K562 (cell line): ENCODE measurements at regions of chr3 and their contacts with region 1.

Region 1: GRCh38 chr3:194141415-194142155 is 5.6 kb downstream of the HES1 start:
- DNase-seq: peak; percentile 89 to 91 (median 90)
- ATAC-seq: peak; percentile 71
- H3K4me3 ChIP-seq: peak overlapping the region; percentile 40
- H3K27ac ChIP-seq: peak overlapping the region; percentile 99
- H3K4me1 ChIP-seq: peaks cover 40 to 53% of the 10 kb centered on the region in 2 experiments
- H3K27me3 ChIP-seq: no peaks in the 10 kb centered on the region
- CTCF ChIP-seq: 0 out of 6 replicates have a peak, but pooled peaks of 1 of the 3 experiments have one; percentile 5
- EP300 ChIP-seq: no peak; the same call in 1 of the 2 replicates
- POLR2A ChIP-seq: peak; percentile 75
- RAD21 ChIP-seq: peak; percentile 40 to 47

Region 2: GRCh38 chr3:193780810-193781472 is 360.6 kb before region 1 on chr3:
- CTCF ChIA-PET with region 1: interaction called, 5 read pairs
- POLR2A ChIA-PET with region 1: interaction called, 17 read pairs
- in situ Hi-C with region 1: loop called (anchors 5 kb)
- intact Hi-C with region 1: loop called (anchors 2 kb)
- DNase-seq: peak; percentile 77 to 85 (median 78)
- ATAC-seq: peak; percentile 93
- H3K4me3 ChIP-seq: no peak overlapping the region
- H3K27ac ChIP-seq: no peak overlapping the region
- H3K4me1 ChIP-seq: peaks cover 10 to 22% of the 10 kb centered on the region in 2 experiments; a peak in 4 of 5 replicates
- H3K27me3 ChIP-seq: no peaks in the 10 kb centered on the region
- CTCF ChIP-seq: peak; percentile 86
- EP300 ChIP-seq: no peak
- POLR2A ChIP-seq: no peak
- RAD21 ChIP-seq: peak; percentile 93 to 96

Region 3: GRCh38 chr3:194030369-194030768 is 111.2 kb before region 1 on chr3:
- CTCF ChIA-PET with region 1: no interaction called
- POLR2A ChIA-PET with region 1: no interaction called
- in situ Hi-C with region 1: no loop called
- intact Hi-C with region 1: no loop called
- DNase-seq: no peak
- ATAC-seq: no peak
- H3K4me3 ChIP-seq: no peak overlapping the region
- H3K27ac ChIP-seq: no peak overlapping the region
- H3K4me1 ChIP-seq: no peaks in the 10 kb centered on the region; a peak in 2 of 5 replicates
- H3K27me3 ChIP-seq: no peaks in the 10 kb centered on the region
- CTCF ChIP-seq: no peak
- EP300 ChIP-seq: no peak
- POLR2A ChIP-seq: no peak
- RAD21 ChIP-seq: no peak

Region 4: GRCh38 chr3:194046995-194047645 is 94.5 kb before region 1 on chr3:
- CTCF ChIA-PET with region 1: no interaction called
- POLR2A ChIA-PET with region 1: no interaction called
- in situ Hi-C with region 1: no loop called
- intact Hi-C with region 1: no loop called
- DNase-seq: no peak
- ATAC-seq: no peak
- H3K4me3 ChIP-seq: no peak overlapping the region
- H3K27ac ChIP-seq: no peak overlapping the region
- H3K4me1 ChIP-seq: peaks cover 4 to 18% of the 10 kb centered on the region in 2 experiments; a peak in 4 of 5 replicates
- H3K27me3 ChIP-seq: no peaks in the 10 kb centered on the region
- CTCF ChIP-seq: no peak
- EP300 ChIP-seq: no peak
- POLR2A ChIP-seq: no peak
- RAD21 ChIP-seq: no peak

Region 5: GRCh38 chr3:194154346-194154745 is 12.8 kb after region 1 on chr3:
- CTCF ChIA-PET with region 1: no interaction called
- POLR2A ChIA-PET with region 1: interaction called, 10 read pairs
- in situ Hi-C with region 1: no loop called
- intact Hi-C with region 1: no loop called
- DNase-seq: no peak
- ATAC-seq: no peak
- H3K4me3 ChIP-seq: no peak overlapping the region
- H3K27ac ChIP-seq: no peak overlapping the region
- H3K4me1 ChIP-seq: peaks cover 8 to 9% of the 10 kb centered on the region in 2 experiments
- H3K27me3 ChIP-seq: no peaks in the 10 kb centered on the region
- CTCF ChIP-seq: no peak
- EP300 ChIP-seq: no peak
- POLR2A ChIP-seq: no peak
- RAD21 ChIP-seq: no peak

Region 6: DNA sequence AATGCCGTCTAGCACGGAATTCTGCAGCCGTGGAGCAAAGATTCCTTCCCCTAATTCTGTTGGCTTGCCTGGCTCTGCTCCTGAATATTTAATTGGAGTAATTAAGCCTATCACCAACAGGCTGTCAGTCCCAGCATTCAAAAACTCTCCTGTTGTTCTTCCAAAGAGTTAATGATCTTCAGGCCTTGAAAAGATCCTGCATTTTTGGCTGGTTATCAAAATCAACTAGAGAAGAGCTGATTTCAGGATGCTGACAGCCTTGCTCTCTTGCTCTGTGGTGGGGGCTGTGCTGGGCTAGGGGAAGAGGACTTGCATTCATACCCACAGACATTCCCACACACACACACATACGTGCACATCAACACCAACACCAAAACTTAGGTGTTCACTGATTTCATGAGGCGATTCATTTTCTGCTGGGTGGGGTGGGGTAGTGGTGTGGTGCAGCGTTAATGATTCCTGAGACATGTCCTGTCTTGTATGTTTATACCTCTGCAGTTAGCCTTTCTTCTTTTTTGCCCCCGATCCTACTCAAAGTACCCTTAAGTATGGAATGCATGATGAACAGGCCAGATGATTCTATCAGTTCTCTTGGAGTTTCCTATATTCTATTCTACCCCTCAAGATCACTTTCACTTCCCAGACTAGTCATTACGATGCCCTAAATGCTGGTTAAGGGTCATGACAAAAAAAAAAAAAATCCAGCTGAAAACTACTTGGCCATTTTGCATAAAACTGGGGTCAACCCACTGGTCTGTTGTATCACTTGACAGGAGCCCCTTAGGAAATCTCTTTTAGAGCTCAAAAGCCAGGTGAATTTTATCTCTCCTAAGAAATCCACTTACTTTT is 167.2 kb after region 1 on chr3:
- CTCF ChIA-PET with region 1: no interaction called
- POLR2A ChIA-PET with region 1: interaction called, 48 read pairs
- in situ Hi-C with region 1: no loop called
- intact Hi-C with region 1: no loop called
- DNase-seq: no peak
- ATAC-seq: no peak
- H3K4me3 ChIP-seq: no peak overlapping the region
- H3K27ac ChIP-seq: no peak overlapping the region
- H3K4me1 ChIP-seq: peaks cover 5 to 9% of the 10 kb centered on the region in 2 experiments; a peak in 4 of 5 replicates
- H3K27me3 ChIP-seq: no peaks in the 10 kb centered on the region
- CTCF ChIP-seq: no peak
- EP300 ChIP-seq: no peak
- POLR2A ChIP-seq: no peak
- RAD21 ChIP-seq: no peak